ENCODE measurements at regions of chr10 and their contacts with region 1.

Region 1: DNA sequence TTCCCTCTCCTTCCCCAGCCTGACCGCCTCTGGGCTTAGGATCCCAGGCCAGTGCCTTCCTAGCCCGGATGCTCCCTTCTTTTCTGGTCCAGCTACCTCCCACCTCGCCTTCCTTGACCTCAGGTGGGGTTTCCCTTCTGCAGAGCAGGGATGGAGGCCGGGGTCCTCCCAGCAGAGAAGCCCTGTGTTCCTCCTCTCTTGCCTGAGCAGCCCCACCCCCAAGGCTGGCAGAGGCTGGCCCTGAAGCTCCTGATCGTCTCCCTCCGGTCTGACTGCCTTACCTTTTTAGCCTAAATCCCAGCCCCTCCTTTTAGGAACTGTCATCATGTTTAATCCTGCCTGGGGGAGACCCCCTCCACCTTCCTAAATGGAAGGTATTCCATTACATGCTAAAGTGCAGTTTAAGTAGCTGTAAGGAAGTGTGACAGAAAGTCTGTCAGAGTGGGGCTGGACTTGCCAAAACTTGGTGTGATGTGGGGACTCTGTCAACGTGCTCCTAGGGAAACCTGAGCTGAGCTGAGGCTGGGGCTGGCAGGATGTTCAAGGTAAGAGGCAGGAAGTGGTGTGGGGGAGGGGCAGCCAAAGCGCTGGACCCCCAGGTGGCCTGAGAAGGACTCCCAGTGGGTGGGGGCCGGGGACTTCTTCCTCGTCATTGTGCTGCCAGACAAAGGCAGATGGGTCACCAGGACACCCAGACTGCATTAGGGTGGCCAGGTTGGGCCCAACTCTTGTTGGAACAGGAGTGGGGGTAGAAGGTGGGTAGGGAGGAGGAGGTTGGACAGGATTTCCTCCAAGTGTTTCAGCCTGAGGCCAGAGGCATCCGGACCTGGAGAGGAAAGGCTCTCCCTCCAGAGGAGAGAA is 39.5 kb downstream of the LBX1 start:
- DNase-seq: no peak
- H3K4me3 ChIP-seq: no peak overlapping the region
- H3K27ac ChIP-seq: no peak overlapping the region
- H3K4me1 ChIP-seq: no peaks in the 10 kb centered on the region
- H3K27me3 ChIP-seq: no peaks in the 10 kb centered on the region
- CTCF ChIP-seq: no peak
- POLR2A ChIP-seq: no peak

Region 2: DNA sequence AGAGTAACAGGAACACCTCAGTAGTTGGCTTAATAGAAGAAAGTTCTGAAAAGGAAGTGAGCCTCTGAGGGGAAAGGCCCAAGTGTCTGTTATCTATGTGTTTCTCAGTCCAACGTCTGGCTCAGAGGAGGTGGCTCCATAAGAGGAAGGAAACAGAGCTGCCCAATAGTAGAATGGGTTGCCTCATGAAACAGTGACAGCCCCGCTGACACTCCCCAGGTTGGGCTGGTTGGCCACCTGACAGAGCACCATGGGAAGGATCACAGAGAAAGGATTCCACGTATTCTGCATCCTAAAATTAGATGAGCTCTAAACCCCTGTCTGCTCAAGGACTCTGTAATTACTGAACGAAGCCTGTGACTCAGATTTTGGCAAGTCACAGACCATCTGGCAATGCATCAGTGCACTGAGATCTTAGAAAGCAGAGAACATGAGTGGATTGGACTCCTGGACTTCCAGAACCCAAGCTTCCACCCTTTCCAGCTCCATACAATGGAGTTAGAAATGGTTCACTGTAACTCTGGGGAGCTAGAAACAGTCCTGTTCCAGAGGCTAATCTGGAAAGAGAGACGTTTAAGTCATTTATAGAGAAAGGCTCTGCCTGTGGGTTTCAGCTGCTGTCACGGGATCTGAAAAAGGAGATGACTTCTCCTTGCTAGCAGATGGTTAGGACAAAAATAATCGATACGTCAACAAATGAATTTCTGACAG is 862.6 kb before region 1 on chr10:
- intact Hi-C with region 1: no loop called
- DNase-seq: no peak
- H3K4me3 ChIP-seq: no peak overlapping the region
- H3K27ac ChIP-seq: no peak overlapping the region
- H3K4me1 ChIP-seq: no peaks in the 10 kb centered on the region
- H3K27me3 ChIP-seq: peaks cover 0 to 29% of the 10 kb centered on the region in 2 donors
- CTCF ChIP-seq: no peak
- POLR2A ChIP-seq: no peak

Region 3: GRCh38 chr10:101550965-101551364 is 361.2 kb after region 1 on chr10:
- intact Hi-C with region 1: loop called (anchors 5 kb)
- DNase-seq: no peak
- H3K4me3 ChIP-seq: no peak overlapping the region
- H3K27ac ChIP-seq: no peak overlapping the region
- H3K4me1 ChIP-seq: no peaks in the 10 kb centered on the region
- H3K27me3 ChIP-seq: no peaks in the 10 kb centered on the region
- CTCF ChIP-seq: no peak
- POLR2A ChIP-seq: no peak

Measured in breast epithelium (tissue), 4 donors.